ENCODE measurements at regions of chr3 and their contacts with region 1.

Region 1: GRCh38 chr3:123660900-123661299 is 76.0 kb upstream of the HACD2 start:
- DNase-seq: peak; percentile 97 to 98
- H3K4me3 ChIP-seq: no peak overlapping the region
- H3K27ac ChIP-seq: peak overlapping the region; percentile 93 to 96
- H3K4me1 ChIP-seq: peaks cover 45 to 52% of the 10 kb centered on the region in 2 donors
- H3K27me3 ChIP-seq: no peaks in the 10 kb centered on the region
- CTCF ChIP-seq: no peak
- POLR2A ChIP-seq: no peak

Region 2: DNA sequence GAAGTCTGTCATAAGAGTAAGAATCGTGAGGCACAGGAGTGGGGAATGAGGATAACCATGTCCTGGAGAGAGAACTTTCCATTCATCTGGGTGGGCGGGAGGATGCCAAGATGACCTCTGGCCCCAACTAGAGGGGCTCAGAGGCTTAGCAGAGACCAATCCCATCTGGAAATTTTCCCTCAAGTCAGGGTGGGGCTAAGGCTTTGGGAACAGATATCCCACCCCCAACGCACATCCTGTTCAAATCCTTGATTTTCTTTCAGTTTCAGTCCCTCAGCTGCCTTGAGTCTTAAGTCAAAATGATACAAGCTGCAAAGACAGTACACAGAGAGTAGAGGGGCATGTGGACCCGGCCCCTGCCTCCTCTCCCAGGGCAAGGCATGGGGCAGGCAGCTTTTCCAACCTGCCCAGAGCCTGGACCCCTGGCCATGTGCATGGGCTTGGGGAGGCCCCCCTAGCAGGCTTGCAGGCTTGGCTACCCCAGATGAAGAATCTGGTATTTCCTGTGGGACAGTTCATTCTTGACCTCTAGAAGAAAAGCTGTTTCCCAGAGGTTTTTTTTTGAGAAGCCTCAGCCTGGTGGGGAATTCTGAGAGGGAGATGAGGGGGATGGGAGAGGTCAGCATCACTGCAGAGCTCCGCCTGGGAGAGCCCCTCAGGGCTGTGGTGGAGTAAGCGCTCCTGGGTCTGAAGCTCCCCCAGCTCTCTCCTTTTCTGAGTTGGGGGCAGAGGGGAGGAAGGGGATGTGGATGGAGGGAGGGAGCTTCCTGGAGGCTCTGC is 33.7 kb after region 1 on chr3:
- intact Hi-C with region 1: loop called (anchors 5 kb)
- DNase-seq: no peak
- H3K4me3 ChIP-seq: peak overlapping the region; percentile 58 to 78
- H3K27ac ChIP-seq: peak overlapping the region; percentile 90 to 96
- H3K4me1 ChIP-seq: peaks cover 26 to 56% of the 10 kb centered on the region in 2 donors
- H3K27me3 ChIP-seq: no peaks in the 10 kb centered on the region
- CTCF ChIP-seq: no peak
- POLR2A ChIP-seq: no peak